ENCODE measurements at regions of chr14 and their contacts with region 1.

Region 1: GRCh38 chr14:75654127-75654732 is 6.4 kb downstream of the ERG28 start:
- DNase-seq: peak; percentile 38
- ATAC-seq: peak; percentile 98
- H3K4me3 ChIP-seq: no peak overlapping the region
- H3K27ac ChIP-seq: no peak overlapping the region
- H3K4me1 ChIP-seq: no peaks in the 10 kb centered on the region
- H3K27me3 ChIP-seq: no peaks in the 10 kb centered on the region
- CTCF ChIP-seq: peak; percentile 97 to 98 (median 97)
- EP300 ChIP-seq: no peak
- POLR2A ChIP-seq: no peak
- RAD21 ChIP-seq: peak; percentile 97

Region 2: DNA sequence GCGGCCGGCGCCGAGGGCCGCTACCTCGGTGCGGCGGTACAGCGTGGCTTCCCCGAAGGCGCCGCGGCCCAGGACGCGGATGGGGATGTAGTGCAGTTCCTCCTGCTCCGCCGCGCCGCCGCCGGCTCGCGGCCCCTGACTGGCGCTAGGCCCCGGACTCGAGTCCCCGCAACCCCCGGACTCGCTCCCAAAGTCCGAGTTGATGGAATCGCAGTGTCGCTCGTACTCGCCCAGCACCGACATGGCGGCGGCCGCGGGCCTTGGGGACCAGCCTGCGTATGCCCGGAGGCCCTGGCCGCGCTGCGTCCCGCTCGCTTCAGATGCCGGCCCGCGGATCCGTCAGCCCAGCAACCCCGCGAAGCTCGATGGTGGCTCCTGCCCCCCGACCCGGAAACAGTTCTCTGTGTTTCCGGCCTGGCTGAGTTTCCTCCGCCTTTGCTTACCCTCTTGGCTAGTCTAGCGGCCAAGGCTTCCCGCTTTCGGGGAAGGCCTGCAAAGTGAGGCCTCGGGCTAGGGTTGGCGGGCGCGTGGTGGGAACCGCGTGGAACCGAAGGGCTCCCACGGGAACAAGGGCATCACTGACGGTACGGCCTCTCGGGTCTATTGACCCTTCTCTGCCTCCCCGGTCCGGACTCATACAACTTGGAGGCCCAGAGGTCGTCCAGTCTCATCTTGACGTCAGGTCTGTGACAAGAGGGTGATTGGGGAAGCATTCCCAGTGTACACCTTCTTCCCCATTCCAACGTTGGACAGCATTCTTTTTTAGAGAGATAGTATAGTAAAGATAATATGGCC is 527.4 kb before region 1 on chr14 and contains the start of gene NEK9:
- CTCF ChIA-PET with region 1: interaction called, 5 read pairs
- POLR2A ChIA-PET with region 1: no interaction called
- RAD21 ChIA-PET with region 1: no interaction called
- SMC1A ChIA-PET with region 1: interaction called, 3 read pairs
- in situ Hi-C with region 1: loop called (anchors 10 kb)
- intact Hi-C with region 1: loop called (anchors 10 kb)
- DNase-seq: peak; percentile 45
- ATAC-seq: peak; percentile 98
- H3K4me3 ChIP-seq: peak within 1 kb of the TSS; percentile 76
- H3K27ac ChIP-seq: peak within 1 kb of the TSS; percentile 88
- H3K4me1 ChIP-seq: peaks cover 11% of the 10 kb centered on the region
- H3K27me3 ChIP-seq: no peaks in the 10 kb centered on the region
- CTCF ChIP-seq: no peak
- EP300 ChIP-seq: no peak
- POLR2A ChIP-seq: peak; percentile 98
- RAD21 ChIP-seq: no peak
- polyA plus RNA-seq, gene NEK9: 6.0 to 15.7 TPM

Region 3: DNA sequence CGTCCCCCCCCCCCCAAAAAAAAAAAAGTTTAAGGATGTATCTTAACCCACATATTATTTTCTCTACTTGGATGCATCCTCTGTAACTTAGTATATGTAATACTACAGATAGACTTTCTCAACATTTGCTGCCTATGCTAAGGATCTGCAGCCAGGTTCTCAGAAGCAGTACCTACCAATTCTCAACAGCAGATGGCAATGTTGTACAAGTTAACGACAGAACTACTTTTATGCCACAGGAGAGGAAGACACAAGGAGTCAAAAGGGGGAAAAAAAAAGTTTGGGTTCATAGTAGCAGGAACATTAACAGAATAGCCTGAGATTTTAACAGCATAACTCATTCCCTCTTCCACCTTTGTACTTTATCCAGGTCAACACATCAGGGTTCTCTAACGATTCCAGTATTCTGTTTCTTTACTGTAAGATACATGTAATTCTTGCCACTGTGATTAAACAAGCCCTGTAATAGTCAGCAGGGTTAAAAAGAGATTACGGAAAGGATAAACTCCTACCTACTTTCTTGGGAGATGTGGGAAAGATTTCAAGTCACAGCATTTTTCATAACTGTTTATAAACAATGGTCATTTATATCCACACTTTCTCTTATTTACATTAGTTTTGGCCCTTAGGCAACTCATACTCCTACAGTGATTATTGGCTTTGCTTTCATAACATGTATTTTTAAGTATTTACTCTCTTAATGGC is 521.7 kb before region 1 on chr14:
- CTCF ChIA-PET with region 1: interaction called, 4 read pairs
- POLR2A ChIA-PET with region 1: no interaction called
- RAD21 ChIA-PET with region 1: no interaction called
- SMC1A ChIA-PET with region 1: no interaction called
- in situ Hi-C with region 1: loop called (anchors 10 kb)
- intact Hi-C with region 1: loop called (anchors 10 kb)
- DNase-seq: peak; percentile 66
- ATAC-seq: peak; percentile 91
- H3K4me3 ChIP-seq: no peak overlapping the region
- H3K27ac ChIP-seq: no peak overlapping the region
- H3K4me1 ChIP-seq: peaks cover 11% of the 10 kb centered on the region
- H3K27me3 ChIP-seq: no peaks in the 10 kb centered on the region
- CTCF ChIP-seq: peak; percentile 67 to 70 (median 68)
- EP300 ChIP-seq: no peak
- POLR2A ChIP-seq: no peak
- RAD21 ChIP-seq: peak; percentile 94

Region 4: GRCh38 chr14:75522224-75522982 is 131.8 kb before region 1 on chr14 and contains the start of gene BATF:
- CTCF ChIA-PET with region 1: interaction called, 52 read pairs
- POLR2A ChIA-PET with region 1: interaction called, 4 read pairs
- RAD21 ChIA-PET with region 1: interaction called, 13 read pairs
- SMC1A ChIA-PET with region 1: interaction called, 145 read pairs
- in situ Hi-C with region 1: no loop called
- intact Hi-C with region 1: no loop called
- DNase-seq: no peak
- ATAC-seq: peak; percentile 58
- H3K4me3 ChIP-seq: peak within 1 kb of the TSS; percentile 95
- H3K27ac ChIP-seq: peak within 1 kb of the TSS; percentile 93
- H3K4me1 ChIP-seq: peaks cover 29% of the 10 kb centered on the region
- H3K27me3 ChIP-seq: no peaks in the 10 kb centered on the region
- CTCF ChIP-seq: no peak
- EP300 ChIP-seq: peak; percentile 22 to 42; a peak in 1 of 4 replicates
- POLR2A ChIP-seq: peak; percentile 98
- RAD21 ChIP-seq: peak; percentile 25; the same call in 1 of the 2 replicates
- polyA plus RNA-seq, gene BATF: 10.0 to 30.9 TPM

Region 5: DNA sequence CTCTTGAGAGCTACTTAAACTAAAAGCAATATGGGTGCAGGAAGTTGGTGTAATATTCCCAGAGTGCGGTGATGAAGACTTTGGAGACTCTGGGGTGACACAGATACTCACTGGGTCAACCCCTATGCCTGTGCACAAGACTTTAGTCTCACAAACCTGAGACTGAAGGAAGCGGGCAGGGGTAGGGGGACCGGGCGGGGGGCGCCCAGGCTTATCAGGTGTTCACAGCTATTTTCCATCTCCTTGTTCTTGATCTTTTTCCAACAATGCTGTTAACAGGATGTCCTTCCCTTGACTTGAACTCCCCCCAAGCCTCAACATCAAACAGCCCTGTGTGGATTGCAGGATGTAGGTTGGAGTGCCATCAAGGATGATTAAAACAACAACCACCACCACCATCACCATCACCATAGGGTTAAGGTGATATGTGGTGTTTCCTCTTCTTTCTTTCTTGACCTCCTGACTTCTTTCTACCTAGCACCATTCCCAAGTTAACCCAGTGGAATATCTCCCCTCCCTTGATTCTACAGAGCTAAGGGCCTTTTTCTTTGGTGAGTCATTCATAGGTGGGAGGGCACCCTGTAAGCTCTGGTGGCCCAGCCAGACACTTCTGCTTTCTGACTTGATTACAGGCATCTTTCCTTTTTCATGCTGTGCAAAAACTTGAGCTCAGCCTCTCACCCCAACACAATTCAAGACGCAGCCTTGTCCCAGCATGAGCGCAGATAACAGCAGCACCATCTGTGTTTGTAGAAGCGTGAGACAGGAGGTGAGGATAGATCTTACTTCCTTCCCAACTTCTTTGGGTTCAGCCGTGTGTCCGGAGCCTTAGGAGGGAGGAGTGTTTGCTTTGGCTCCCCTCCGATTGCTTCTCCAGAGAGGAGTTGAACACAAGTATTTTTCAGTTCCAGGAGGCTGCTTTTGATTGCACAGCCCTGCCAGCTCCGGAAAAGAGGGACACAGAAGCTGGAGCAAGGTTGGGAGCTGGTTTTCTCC is 49.1 kb before region 1 on chr14:
- CTCF ChIA-PET with region 1: interaction called, 11 read pairs
- POLR2A ChIA-PET with region 1: no interaction called
- RAD21 ChIA-PET with region 1: no interaction called
- SMC1A ChIA-PET with region 1: interaction called, 4 read pairs
- in situ Hi-C with region 1: no loop called
- intact Hi-C with region 1: no loop called
- DNase-seq: no peak
- ATAC-seq: no peak
- H3K4me3 ChIP-seq: no peak overlapping the region
- H3K27ac ChIP-seq: no peak overlapping the region
- H3K4me1 ChIP-seq: no peaks in the 10 kb centered on the region
- H3K27me3 ChIP-seq: no peaks in the 10 kb centered on the region
- CTCF ChIP-seq: no peak
- EP300 ChIP-seq: no peak
- POLR2A ChIP-seq: no peak
- RAD21 ChIP-seq: no peak

Region 6: GRCh38 chr14:75628816-75629215 is 25.4 kb before region 1 on chr14:
- CTCF ChIA-PET with region 1: interaction called, 33 read pairs
- POLR2A ChIA-PET with region 1: interaction called, 3 read pairs
- RAD21 ChIA-PET with region 1: interaction called, 5 read pairs
- SMC1A ChIA-PET with region 1: interaction called, 13 read pairs
- in situ Hi-C with region 1: no loop called
- intact Hi-C with region 1: no loop called
- DNase-seq: no peak
- ATAC-seq: no peak
- H3K4me3 ChIP-seq: no peak overlapping the region
- H3K27ac ChIP-seq: no peak overlapping the region
- H3K4me1 ChIP-seq: no peaks in the 10 kb centered on the region
- H3K27me3 ChIP-seq: no peaks in the 10 kb centered on the region
- CTCF ChIP-seq: no peak
- EP300 ChIP-seq: no peak
- POLR2A ChIP-seq: no peak
- RAD21 ChIP-seq: no peak

Region 7: GRCh38 chr14:75642056-75642455 is 12.2 kb before region 1 on chr14:
- CTCF ChIA-PET with region 1: interaction called, 10 read pairs
- POLR2A ChIA-PET with region 1: interaction called, 10 read pairs
- RAD21 ChIA-PET with region 1: no interaction called
- SMC1A ChIA-PET with region 1: interaction called, 5 read pairs
- in situ Hi-C with region 1: no loop called
- intact Hi-C with region 1: no loop called
- DNase-seq: no peak
- ATAC-seq: no peak
- H3K4me3 ChIP-seq: no peak overlapping the region
- H3K27ac ChIP-seq: no peak overlapping the region
- H3K4me1 ChIP-seq: no peaks in the 10 kb centered on the region
- H3K27me3 ChIP-seq: no peaks in the 10 kb centered on the region
- CTCF ChIP-seq: no peak
- EP300 ChIP-seq: no peak
- POLR2A ChIP-seq: no peak
- RAD21 ChIP-seq: no peak

Region 8: GRCh38 chr14:75794615-75795038 is 140.4 kb after region 1 on chr14:
- CTCF ChIA-PET with region 1: no interaction called
- POLR2A ChIA-PET with region 1: no interaction called
- RAD21 ChIA-PET with region 1: no interaction called
- SMC1A ChIA-PET with region 1: no interaction called
- in situ Hi-C with region 1: no loop called
- intact Hi-C with region 1: no loop called
- DNase-seq: no peak
- ATAC-seq: peak; percentile 40; the same call in 2 of the 3 replicates
- H3K4me3 ChIP-seq: no peak overlapping the region
- H3K27ac ChIP-seq: no peak overlapping the region
- H3K4me1 ChIP-seq: no peaks in the 10 kb centered on the region
- H3K27me3 ChIP-seq: no peaks in the 10 kb centered on the region
- CTCF ChIP-seq: peak in 2 of 3 experiments; percentile 17 to 37; a peak in 2 of 6 replicates
- EP300 ChIP-seq: no peak
- POLR2A ChIP-seq: no peak
- RAD21 ChIP-seq: no peak

Region 9: GRCh38 chr14:75941030-75941429 is 286.8 kb after region 1 on chr14:
- CTCF ChIA-PET with region 1: no interaction called
- POLR2A ChIA-PET with region 1: no interaction called
- RAD21 ChIA-PET with region 1: no interaction called
- SMC1A ChIA-PET with region 1: no interaction called
- in situ Hi-C with region 1: no loop called
- intact Hi-C with region 1: no loop called
- DNase-seq: no peak
- ATAC-seq: no peak
- H3K4me3 ChIP-seq: no peak overlapping the region
- H3K27ac ChIP-seq: no peak overlapping the region
- H3K4me1 ChIP-seq: no peaks in the 10 kb centered on the region
- H3K27me3 ChIP-seq: no peaks in the 10 kb centered on the region
- CTCF ChIP-seq: no peak
- EP300 ChIP-seq: no peak
- POLR2A ChIP-seq: no peak
- RAD21 ChIP-seq: no peak

Region 10: GRCh38 chr14:75960231-75960630 is 306.0 kb after region 1 on chr14:
- CTCF ChIA-PET with region 1: no interaction called
- POLR2A ChIA-PET with region 1: no interaction called
- RAD21 ChIA-PET with region 1: no interaction called
- SMC1A ChIA-PET with region 1: no interaction called
- in situ Hi-C with region 1: no loop called
- intact Hi-C with region 1: no loop called
- DNase-seq: peak; percentile 78
- ATAC-seq: peak; percentile 97
- H3K4me3 ChIP-seq: no peak overlapping the region
- H3K27ac ChIP-seq: peak overlapping the region; percentile 38
- H3K4me1 ChIP-seq: peaks cover 19% of the 10 kb centered on the region
- H3K27me3 ChIP-seq: no peaks in the 10 kb centered on the region
- CTCF ChIP-seq: no peak
- EP300 ChIP-seq: 0 out of 4 replicates have a peak, but pooled peaks of 1 of the 2 experiments have one; percentile 18
- POLR2A ChIP-seq: no peak
- RAD21 ChIP-seq: no peak

Region 11: GRCh38 chr14:75989134-75989533 is 334.9 kb after region 1 on chr14:
- CTCF ChIA-PET with region 1: no interaction called
- POLR2A ChIA-PET with region 1: no interaction called
- RAD21 ChIA-PET with region 1: no interaction called
- SMC1A ChIA-PET with region 1: no interaction called
- in situ Hi-C with region 1: no loop called
- intact Hi-C with region 1: no loop called
- DNase-seq: no peak
- ATAC-seq: no peak
- H3K4me3 ChIP-seq: no peak overlapping the region
- H3K27ac ChIP-seq: no peak overlapping the region
- H3K4me1 ChIP-seq: peaks cover 15% of the 10 kb centered on the region
- H3K27me3 ChIP-seq: no peaks in the 10 kb centered on the region
- CTCF ChIP-seq: no peak
- EP300 ChIP-seq: no peak
- POLR2A ChIP-seq: no peak
- RAD21 ChIP-seq: no peak